SK-N-SH (cell line): ENCODE measurements at regions of chr18 and their contacts with region 1.

Region 1: DNA sequence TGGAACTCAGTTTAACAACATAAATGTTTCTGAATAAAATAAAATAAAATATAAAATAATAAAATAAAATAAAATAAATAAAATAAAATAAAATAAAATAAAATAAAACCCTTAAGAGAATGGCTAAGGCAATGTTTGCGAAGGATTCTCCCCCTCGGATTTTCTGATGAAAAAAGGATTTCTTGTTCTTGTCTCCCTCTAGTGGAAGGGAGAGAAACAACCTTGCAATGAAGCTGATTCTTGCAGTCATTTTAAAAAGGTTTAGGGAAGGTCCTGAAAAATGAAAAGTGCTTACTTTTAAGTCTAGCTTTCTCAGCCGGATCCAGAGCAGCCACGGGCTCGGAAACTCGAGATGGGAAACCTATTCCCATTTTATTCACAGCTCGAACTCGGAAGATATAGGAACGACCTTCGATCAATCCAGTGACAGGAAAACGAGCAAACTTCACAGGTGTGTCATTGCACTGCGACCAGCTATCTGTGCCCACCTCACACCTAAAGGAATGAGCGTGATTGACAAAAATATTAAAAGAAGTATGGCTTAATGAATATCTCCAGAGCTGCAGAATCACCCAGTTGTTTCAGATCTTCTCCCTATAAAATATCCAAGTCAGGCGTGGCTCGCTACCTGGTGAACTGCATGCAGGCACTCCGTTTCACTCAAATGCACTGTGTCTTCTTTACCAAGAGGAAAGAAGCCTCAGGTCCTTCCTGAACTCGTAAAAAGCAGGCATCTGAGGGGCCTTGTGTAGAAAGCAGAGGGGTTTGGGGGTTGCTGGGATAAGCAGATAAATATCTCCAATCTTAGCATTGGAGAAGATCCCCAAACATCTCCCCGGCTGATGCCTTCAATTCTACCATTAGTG is 68.1 kb downstream of the MYOM1 start:
- DNase-seq: peak; percentile 64
- H3K4me3 ChIP-seq: no peak overlapping the region
- H3K27ac ChIP-seq: no peak overlapping the region
- H3K4me1 ChIP-seq: no peaks in the 10 kb centered on the region; a peak in 1 of 4 replicates
- H3K27me3 ChIP-seq: no peaks in the 10 kb centered on the region
- CTCF ChIP-seq: peak; percentile 75
- EP300 ChIP-seq: no peak
- RAD21 ChIP-seq: peak; percentile 74

Region 2: DNA sequence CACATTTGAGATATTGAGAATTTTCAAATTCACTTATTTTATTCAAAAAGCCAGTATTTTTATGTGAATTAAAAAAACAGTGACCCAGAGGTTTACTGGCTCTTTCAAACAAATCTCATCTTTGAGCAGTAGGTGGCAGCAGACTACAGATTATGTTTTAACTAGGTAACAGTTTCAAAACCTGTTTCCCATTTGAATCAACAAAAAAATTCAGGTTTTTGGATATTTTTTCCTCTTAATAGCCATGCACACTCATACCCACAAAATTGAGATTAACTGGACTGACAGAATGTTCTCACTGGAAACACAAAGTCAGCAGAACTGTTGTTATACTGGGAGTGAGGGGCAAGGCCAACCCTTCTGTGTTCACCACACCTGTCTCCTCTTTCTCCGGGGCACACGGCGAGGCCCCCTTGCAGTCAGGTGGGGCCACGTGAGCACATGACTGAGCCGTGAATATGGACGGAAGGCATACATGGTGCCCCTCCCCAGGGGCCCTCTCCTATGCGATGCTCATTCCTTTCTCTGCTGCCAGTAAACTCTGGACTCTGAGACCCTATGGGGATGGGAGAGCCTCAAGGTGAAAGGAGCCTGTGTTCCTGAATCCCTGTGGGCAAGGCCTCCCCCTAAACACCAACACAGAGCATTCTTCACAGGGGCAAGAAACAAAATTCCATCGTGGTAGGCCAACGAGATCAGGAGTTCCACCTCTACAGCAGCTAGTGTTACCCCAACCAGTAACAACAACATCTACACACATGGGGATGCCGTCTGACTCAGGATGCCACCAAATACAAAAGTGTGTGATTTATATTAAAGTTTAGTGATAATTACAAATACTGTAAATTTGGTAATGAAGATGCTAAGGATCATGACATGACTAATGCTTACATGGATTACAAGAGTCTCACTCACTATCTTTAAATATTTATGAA is 219.1 kb before region 1 on chr18:
- CTCF ChIA-PET with region 1: interaction called, 16 read pairs
- POLR2A ChIA-PET with region 1: no interaction called
- DNase-seq: peak; percentile 64
- H3K4me3 ChIP-seq: no peak overlapping the region; a peak in 1 of 4 replicates
- H3K27ac ChIP-seq: no peak overlapping the region; a peak in 1 of 4 replicates
- H3K4me1 ChIP-seq: no peaks in the 10 kb centered on the region; a peak in 1 of 4 replicates
- H3K27me3 ChIP-seq: no peaks in the 10 kb centered on the region
- CTCF ChIP-seq: peak; percentile 86
- EP300 ChIP-seq: no peak
- RAD21 ChIP-seq: peak; percentile 89

Region 3: DNA sequence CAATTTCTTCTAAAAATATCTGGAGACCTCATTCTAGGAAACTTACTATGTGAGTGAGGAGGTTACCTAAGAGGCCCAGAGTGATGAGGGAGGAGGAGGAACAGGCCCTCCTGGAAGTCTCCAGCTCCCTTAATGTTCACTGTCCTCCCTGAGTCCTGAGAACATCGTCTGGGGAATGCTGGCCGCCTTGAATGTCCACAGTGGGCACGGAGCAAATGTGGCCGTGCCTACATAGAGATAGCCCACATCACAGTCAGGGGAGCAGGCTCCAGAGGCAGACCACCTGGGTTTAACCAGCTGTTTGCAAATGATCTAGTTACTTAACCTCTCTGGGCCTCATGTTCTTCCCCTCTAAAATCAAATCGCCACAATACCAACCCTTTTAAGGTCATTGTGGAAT is 55.7 kb before region 1 on chr18:
- CTCF ChIA-PET with region 1: no interaction called
- POLR2A ChIA-PET with region 1: no interaction called
- DNase-seq: no peak
- H3K4me3 ChIP-seq: no peak overlapping the region
- H3K27ac ChIP-seq: no peak overlapping the region
- H3K4me1 ChIP-seq: peaks cover 3 to 5% of the 10 kb centered on the region in 2 experiments; a peak in 2 of 4 replicates
- H3K27me3 ChIP-seq: no peaks in the 10 kb centered on the region
- CTCF ChIP-seq: no peak
- EP300 ChIP-seq: no peak
- RAD21 ChIP-seq: no peak

Region 4: GRCh38 chr18:3117493-3118192 is 34.0 kb before region 1 on chr18:
- CTCF ChIA-PET with region 1: interaction called, 10 read pairs
- POLR2A ChIA-PET with region 1: no interaction called
- DNase-seq: no peak
- H3K4me3 ChIP-seq: no peak overlapping the region
- H3K27ac ChIP-seq: no peak overlapping the region
- H3K4me1 ChIP-seq: no peaks in the 10 kb centered on the region; a peak in 1 of 4 replicates
- H3K27me3 ChIP-seq: no peaks in the 10 kb centered on the region
- CTCF ChIP-seq: no peak
- EP300 ChIP-seq: no peak
- RAD21 ChIP-seq: no peak

Region 5: DNA sequence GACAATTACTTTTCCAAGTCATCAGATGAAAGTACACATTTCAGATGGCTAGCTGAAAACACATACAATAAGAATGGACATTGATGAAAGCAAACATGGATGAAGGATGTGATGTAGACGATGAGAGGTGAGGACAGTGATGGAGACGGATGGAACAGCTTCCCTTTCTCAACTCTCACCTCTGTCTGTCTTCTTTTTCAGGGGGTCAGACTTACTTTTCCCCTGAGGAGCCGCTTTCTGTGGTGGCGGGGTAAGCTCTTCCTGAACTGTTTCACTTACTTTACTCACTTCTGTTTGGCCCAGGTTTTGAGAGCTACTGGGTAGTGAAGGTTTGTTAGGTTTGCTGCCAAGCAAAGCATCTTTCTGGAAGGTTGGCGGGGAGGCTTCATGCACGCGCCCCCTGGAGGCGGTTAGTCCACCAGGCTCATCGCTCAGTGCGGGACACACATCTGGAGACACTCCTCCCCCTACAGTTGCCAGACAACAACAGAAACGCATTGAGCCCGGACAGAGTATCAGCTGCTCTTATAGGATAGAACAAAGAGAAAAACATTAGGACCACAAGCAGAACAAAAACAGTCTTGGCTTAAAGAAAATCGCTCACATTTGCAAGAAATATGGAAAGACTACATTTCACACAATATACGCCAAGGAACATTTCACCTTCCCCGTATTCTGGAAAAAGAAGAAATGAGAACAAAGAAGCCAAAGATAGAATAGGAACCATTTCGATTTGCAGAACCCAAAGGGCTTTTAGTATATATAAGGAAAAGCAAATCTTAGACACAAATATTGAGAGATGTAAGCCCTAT is 22.4 kb before region 1 on chr18:
- CTCF ChIA-PET with region 1: interaction called, 21 read pairs
- POLR2A ChIA-PET with region 1: no interaction called
- DNase-seq: peak; percentile 84
- H3K4me3 ChIP-seq: no peak overlapping the region; a peak in 1 of 4 replicates
- H3K27ac ChIP-seq: no peak overlapping the region
- H3K4me1 ChIP-seq: peaks cover 0 to 2% of the 10 kb centered on the region in 2 experiments; a peak in 2 of 4 replicates
- H3K27me3 ChIP-seq: no peaks in the 10 kb centered on the region
- CTCF ChIP-seq: peak; percentile 87
- EP300 ChIP-seq: no peak
- RAD21 ChIP-seq: peak; percentile 71

Region 6: DNA sequence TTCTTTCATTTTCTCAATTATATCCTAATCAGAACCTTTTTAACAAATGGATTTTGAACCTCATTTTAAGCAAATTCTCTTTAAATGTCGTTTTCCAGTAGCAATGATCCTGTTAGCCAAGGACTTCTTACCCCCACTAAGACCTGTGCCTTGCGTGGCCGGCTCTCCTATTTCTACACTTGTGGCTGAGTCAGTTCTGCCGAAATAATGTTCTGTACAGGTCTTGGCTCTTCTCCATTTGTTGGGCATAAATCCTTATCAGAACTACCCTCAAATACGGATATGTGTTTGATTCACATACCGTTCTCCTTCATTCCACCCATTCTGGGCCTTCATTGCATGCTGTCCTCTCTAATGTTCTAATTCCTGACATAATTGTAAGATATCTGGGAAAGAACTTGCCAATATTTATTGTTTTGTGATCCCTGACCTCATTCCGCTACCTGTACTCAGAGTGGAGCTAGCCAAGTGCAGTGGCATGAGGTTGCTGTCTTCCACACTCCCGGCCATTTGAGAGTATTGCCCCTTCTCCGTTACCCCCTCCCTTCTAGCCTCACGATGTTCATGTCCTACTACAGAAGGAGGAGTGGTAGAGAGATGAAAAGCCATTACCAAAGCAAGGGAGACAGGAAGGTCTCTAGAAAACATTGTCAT is 10.5 kb before region 1 on chr18:
- CTCF ChIA-PET with region 1: interaction called, 10 read pairs
- POLR2A ChIA-PET with region 1: no interaction called
- DNase-seq: no peak
- H3K4me3 ChIP-seq: no peak overlapping the region
- H3K27ac ChIP-seq: no peak overlapping the region
- H3K4me1 ChIP-seq: no peaks in the 10 kb centered on the region
- H3K27me3 ChIP-seq: no peaks in the 10 kb centered on the region
- CTCF ChIP-seq: no peak
- EP300 ChIP-seq: no peak
- RAD21 ChIP-seq: no peak

Region 7: GRCh38 chr18:3162181-3162580 is 10.5 kb after region 1 on chr18:
- CTCF ChIA-PET with region 1: interaction called, 12 read pairs
- POLR2A ChIA-PET with region 1: no interaction called
- DNase-seq: no peak
- H3K4me3 ChIP-seq: no peak overlapping the region
- H3K27ac ChIP-seq: no peak overlapping the region
- H3K4me1 ChIP-seq: no peaks in the 10 kb centered on the region
- H3K27me3 ChIP-seq: no peaks in the 10 kb centered on the region
- CTCF ChIP-seq: no peak
- EP300 ChIP-seq: no peak
- RAD21 ChIP-seq: no peak

Region 8: DNA sequence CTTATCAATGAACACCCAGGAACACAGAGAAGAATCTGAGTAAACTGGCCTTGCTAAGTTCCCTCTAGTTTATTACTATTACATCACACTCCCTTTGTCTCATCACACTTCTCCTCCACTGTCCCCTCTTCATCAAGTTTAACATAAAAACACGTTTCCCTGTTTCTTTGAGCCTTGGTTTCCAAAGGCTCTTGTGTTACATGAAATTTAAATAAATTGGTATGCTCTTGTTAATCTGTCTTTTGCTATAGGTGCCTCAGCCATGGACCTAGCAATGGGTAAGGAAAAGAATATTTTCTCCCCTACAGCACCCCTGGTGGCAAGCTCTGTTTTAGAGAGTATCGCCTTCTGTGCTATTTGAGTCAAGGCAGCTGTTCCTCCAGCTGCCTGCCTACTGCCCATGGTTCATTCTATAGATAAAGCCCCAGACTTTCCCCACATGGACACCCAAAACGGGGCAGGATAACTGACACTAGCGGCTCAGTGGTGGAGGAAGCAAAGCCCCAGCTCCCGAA is 330.1 kb after region 1 on chr18:
- CTCF ChIA-PET with region 1: no interaction called
- POLR2A ChIA-PET with region 1: no interaction called
- DNase-seq: peak; percentile 52
- H3K4me3 ChIP-seq: no peak overlapping the region
- H3K27ac ChIP-seq: no peak overlapping the region
- H3K4me1 ChIP-seq: no peaks in the 10 kb centered on the region
- H3K27me3 ChIP-seq: no peaks in the 10 kb centered on the region
- CTCF ChIP-seq: peak; percentile 51
- EP300 ChIP-seq: no peak
- RAD21 ChIP-seq: peak; percentile 42